Activated T-helper 1 cell treated with anti-CD3 and anti-CD28 coated beads, Interleukin-12 subunit alpha, Interleukin-12 subunit beta, Interleukin-2, Interleukin-4 antibody, amounts not matched to agents 30 ng/mL and 10 ng/mL and 1 ng/mL, durations not matched to agents 14 hours and 24 hours and 36 hours (primary cell): ENCODE measurements at regions of chr13 and their contacts with region 1.

Region 1: GRCh38 chr13:99087096-99087953 is 109.5 kb upstream of the DOCK9 start:
- DNase-seq: peak; percentile 93
- H3K4me3 Mint-ChIP-seq: peak overlapping the region; percentile 97
- H3K27ac Mint-ChIP-seq: peak overlapping the region; percentile 98
- H3K4me1 Mint-ChIP-seq: peaks cover 39% of the 10 kb centered on the region
- H3K27me3 Mint-ChIP-seq: peaks cover 2% of the 10 kb centered on the region

Region 2: GRCh38 chr13:97432917-97433726 is 1654.2 kb before region 1 on chr13:
- intact Hi-C with region 1: loop called (anchors 5 kb)
- DNase-seq: peak; percentile 99
- H3K4me3 Mint-ChIP-seq: peak overlapping the region; percentile 99
- H3K27ac Mint-ChIP-seq: peak overlapping the region; percentile 100
- H3K4me1 Mint-ChIP-seq: peaks cover 39% of the 10 kb centered on the region
- H3K27me3 Mint-ChIP-seq: peaks cover 12% of the 10 kb centered on the region

Region 3: GRCh38 chr13:98869408-98870090 is 217.8 kb before region 1 on chr13:
- intact Hi-C with region 1: loop called (anchors 2 kb)
- DNase-seq: no peak
- H3K4me3 Mint-ChIP-seq: no peak overlapping the region
- H3K27ac Mint-ChIP-seq: no peak overlapping the region
- H3K4me1 Mint-ChIP-seq: peaks cover 43% of the 10 kb centered on the region
- H3K27me3 Mint-ChIP-seq: no peaks in the 10 kb centered on the region

Region 4: DNA sequence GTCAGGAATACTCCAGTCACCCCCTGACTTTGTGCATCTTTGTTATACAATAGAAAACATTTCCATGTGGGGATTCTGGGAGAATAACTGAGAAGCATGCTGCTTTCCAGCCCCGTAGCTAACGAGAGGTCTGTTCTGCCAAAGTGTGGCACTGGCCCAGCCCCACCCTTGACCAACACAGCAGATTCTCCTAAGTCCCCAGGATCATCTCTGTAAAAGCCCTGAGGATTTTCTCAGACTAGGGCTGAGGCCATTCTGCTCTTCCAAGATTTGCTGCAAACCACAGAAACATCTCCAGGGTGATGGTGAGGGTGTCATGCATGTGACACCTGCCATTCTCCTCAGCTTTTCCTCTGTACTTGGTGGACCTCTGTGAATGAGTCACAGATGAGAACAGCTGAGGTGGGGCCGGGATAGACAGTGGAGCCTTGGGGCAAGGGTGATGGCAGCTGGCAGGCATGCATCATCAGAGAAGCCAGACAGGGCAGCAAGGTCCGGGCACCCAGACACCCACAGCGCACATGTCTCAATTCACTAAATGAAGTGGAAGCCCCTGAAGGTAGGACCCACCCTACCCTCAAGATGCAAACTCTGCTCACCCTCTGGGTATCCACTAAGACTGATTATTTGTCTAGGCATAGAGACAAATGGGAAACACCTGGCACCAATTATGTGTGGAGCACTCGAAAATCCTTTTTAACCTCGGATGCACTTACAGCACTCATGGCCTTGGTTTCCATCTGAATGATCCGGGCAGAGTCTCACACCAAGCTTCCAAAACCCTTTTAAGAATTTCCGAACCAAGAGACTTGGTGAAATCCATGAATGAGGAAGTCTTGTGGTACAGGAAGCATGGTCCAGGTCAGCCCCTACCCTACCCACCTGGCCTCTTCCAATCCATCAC is 89.3 kb before region 1 on chr13:
- intact Hi-C with region 1: loop called (anchors 5 kb)
- DNase-seq: no peak
- H3K4me3 Mint-ChIP-seq: no peak overlapping the region
- H3K27ac Mint-ChIP-seq: no peak overlapping the region
- H3K4me1 Mint-ChIP-seq: peaks cover 73% of the 10 kb centered on the region
- H3K27me3 Mint-ChIP-seq: no peaks in the 10 kb centered on the region

Region 5: DNA sequence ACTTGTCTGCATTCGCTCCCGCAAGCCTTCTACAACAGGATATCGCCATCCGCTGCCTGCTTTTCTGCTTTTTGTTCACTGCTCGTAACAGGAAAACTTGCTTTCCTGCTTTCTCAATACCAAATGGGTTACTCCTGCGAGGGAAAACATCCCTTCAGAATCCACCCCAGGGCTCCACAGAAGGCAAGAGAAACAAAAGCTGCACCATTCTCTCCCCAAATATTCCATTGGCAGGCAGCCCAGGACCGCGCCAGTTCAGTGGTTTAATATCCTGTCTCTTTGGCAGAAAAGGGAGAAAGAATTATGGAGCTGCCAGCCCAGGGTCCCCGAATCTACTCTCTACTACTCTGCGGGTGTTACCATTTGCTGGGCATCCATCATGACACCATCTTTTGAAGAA is 24.7 kb before region 1 on chr13:
- intact Hi-C with region 1: no loop called
- DNase-seq: no peak
- H3K4me3 Mint-ChIP-seq: no peak overlapping the region
- H3K27ac Mint-ChIP-seq: no peak overlapping the region
- H3K4me1 Mint-ChIP-seq: peaks cover 71% of the 10 kb centered on the region
- H3K27me3 Mint-ChIP-seq: no peaks in the 10 kb centered on the region

Region 6: DNA sequence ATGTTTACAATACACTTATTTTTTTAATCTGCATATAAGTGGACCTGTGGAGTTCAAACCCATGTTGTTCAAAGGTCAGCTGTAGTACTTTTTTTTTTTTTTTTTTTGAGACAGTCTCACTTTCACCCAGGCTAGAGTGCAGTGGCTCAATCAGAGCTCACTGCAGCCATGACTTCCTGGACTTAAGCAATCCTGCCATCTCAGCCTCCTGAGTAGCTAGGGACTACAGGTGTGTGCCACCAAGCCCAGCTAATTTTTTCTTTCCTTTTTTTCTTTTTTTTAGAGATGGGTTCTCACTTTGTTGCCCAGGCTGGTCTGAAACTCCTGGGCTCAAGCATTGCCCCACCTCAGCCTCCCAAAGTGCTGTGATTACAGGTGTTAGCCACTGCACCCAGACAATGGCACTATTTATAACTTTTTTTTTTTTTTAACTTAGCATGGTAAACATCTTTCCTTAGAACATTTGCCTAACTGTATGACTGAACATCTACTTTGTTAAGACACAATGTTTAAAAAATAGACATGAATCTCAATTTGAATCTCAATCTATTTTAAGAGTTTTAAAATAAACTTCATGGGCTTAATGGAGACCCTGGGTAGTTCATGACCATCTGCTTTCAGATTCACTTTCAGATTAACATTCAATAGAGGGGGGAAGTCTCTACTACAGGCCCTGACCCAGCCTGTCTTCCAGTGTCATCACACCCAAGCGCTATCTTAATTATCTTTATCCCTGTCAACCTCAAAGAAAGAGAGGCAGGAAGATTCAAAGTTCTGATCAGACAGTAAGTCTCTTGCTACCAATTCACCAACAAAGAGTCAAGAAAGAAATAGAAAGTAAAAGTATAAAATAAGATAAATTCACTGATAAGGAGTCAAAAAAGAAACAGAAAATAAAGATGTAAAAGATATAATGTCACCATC is 11.8 kb before region 1 on chr13:
- intact Hi-C with region 1: loop called (anchors 1 kb)
- DNase-seq: no peak
- H3K4me3 Mint-ChIP-seq: peak overlapping the region; percentile 48
- H3K27ac Mint-ChIP-seq: peak overlapping the region; percentile 88
- H3K4me1 Mint-ChIP-seq: peaks cover 66% of the 10 kb centered on the region
- H3K27me3 Mint-ChIP-seq: no peaks in the 10 kb centered on the region

Region 7: DNA sequence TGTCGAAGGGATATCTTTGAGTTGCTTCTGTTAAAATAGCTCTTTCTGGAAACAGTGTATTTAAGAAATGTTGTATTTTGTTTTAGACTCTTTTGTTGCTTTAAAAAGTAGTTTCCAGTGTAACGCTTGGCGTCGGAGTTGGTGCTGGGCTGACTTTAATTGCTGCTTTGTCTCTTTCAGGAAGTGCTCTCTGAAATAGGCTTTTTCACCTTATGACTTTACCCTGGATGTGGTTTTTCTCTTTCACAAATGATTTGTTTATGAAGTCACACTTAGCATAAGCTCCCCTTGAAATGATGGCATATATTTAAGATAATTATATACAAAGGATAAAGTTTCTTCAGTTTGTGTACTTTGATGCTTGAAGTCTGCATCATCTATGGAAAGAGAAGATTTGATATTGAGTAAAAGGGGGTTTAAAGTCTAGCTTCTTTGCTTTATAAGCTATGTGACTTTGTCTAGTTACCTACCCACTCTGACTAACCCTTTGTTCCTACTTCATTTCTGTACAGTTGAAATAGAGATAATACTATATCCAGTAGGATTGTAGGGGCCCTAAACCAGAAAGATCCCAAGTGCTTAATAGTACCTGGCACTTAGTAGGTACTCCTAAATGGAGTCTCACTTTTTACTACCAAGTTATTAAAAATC is 171.0 kb after region 1 on chr13 and contains the start of gene GPR18:
- intact Hi-C with region 1: loop called (anchors 2 kb)
- DNase-seq: no peak
- H3K4me3 Mint-ChIP-seq: peak within 1 kb of the TSS; percentile 88
- H3K27ac Mint-ChIP-seq: peak within 1 kb of the TSS; percentile 89
- H3K4me1 Mint-ChIP-seq: peaks cover 66% of the 10 kb centered on the region
- H3K27me3 Mint-ChIP-seq: no peaks in the 10 kb centered on the region
- total RNA-seq, gene GPR18: 12.0 and 15.9 TPM in 2 replicates

Region 8: DNA sequence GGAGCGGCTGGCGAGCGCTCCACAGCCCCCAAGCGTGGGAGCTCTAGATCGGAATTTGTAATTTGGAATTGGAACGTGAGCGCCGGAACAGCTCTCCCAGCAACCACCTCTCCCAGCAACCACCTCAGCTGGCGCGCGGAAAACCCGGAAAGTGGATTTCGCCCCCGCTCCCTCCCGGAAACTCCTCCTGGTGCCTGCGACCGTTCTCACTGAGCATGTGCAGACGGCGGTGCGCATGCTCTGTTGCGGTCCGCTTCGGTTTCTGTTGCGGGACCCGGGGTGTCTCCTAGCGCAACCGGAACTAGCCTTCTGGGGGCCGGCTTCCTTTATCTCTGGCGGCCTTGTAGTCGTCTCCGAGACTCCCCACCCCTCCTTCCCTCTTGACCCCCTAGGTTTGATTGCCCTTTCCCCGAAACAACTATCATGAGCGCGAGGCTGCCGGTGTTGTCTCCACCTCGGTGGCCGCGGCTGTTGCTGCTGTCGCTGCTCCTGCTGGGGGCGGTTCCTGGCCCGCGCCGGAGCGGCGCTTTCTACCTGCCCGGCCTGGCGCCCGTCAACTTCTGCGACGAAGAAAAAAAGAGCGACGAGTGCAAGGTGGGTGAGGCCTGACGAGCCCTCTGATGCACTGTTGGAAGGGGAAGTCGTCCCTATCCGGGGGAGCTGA is 414.0 kb after region 1 on chr13 and contains the start of gene TM9SF2:
- intact Hi-C with region 1: loop called (anchors 1 kb)
- DNase-seq: peak; percentile 95
- H3K4me3 Mint-ChIP-seq: peak within 1 kb of the TSS; percentile 96
- H3K27ac Mint-ChIP-seq: peak within 1 kb of the TSS; percentile 95
- H3K4me1 Mint-ChIP-seq: peaks cover 70% of the 10 kb centered on the region
- H3K27me3 Mint-ChIP-seq: peaks cover 1% of the 10 kb centered on the region
- total RNA-seq, gene TM9SF2: 59.1 and 62.6 TPM in 2 replicates